Ovary (tissue), 10 donors: ENCODE measurements at regions of chr3 and their contacts with region 1.

Region 1: DNA sequence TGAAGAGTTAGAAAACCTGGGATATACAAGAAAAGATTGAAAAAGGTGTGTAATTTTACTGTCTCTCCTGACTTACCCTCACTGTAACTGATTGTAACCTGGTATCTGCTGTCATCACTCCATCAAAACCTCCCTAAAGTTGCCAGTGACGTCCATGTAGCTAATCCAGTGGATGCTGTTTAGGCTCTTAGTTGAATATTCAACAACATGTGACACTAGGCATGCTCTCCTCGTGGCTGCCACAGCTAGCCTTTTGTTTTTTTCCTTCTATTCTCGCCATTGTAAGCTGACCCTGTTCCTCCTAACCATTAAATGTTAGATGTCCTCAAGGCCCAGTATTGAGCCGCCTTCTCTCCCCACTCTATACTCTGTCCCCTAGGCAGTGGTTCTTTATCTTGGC is 41.6 kb downstream of the GADL1 start:
- DNase-seq: no peak
- H3K4me3 ChIP-seq: no peak overlapping the region
- H3K27ac ChIP-seq: no peak overlapping the region
- H3K4me1 ChIP-seq: no peaks in the 10 kb centered on the region
- H3K27me3 ChIP-seq: no peaks in the 10 kb centered on the region
- CTCF ChIP-seq: no peak
- EP300 ChIP-seq: no peak
- POLR2A ChIP-seq: no peak

Region 2: GRCh38 chr3:29373131-29373680 is 1479.6 kb before region 1 on chr3:
- intact Hi-C with region 1: loop called in 1 of 4 experiments (anchors 5 kb)
- DNase-seq: no peak
- H3K4me3 ChIP-seq: no peak overlapping the region
- H3K27ac ChIP-seq: no peak overlapping the region
- H3K4me1 ChIP-seq: peaks cover 6% of the 10 kb centered on the region
- H3K27me3 ChIP-seq: no peaks in the 10 kb centered on the region
- CTCF ChIP-seq: no peak
- EP300 ChIP-seq: no peak
- POLR2A ChIP-seq: no peak